ENCODE measurements at regions of chr6 and their contacts with region 1.

Region 1: GRCh38 chr6:144582939-144583613 is 297.9 kb downstream of the UTRN start:
- DNase-seq: no peak
- ATAC-seq: no peak
- H3K4me3 ChIP-seq: no peak overlapping the region
- H3K27ac ChIP-seq: no peak overlapping the region
- H3K4me1 ChIP-seq: peaks cover 0 to 13% of the 10 kb centered on the region in 2 experiments; a peak in 2 of 4 replicates
- H3K27me3 ChIP-seq: no peaks in the 10 kb centered on the region
- CTCF ChIP-seq: no peak
- POLR2A ChIP-seq: no peak
- RAD21 ChIP-seq: no peak

Region 2: DNA sequence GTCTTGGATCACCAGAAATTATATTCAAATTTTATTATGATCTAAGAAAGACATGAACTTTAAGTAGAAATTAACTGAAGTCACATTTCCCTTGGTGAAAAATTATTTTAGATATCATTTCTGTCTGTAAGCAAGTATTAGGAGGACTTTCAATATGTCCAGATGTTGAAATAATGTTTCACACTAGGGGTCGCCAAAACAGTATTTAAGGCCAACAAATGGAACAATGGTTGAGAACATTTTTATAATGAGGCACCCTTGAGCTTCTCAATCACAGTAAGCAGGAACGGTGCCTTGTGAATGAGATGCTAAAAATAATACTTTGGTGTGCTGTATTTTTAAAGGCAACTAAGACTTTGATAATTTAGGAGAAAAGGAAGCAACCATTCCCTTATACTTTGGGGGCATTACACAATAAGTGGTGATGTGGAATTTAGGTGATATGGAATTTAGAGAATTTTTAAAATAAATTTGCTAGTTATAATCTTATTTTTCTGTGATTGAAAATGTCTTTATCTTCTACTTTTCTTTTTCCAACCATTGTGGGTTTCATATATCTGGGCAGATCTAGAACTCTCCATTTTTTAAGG is 478.1 kb before region 1 on chr6:
- CTCF ChIA-PET with region 1: no interaction called
- POLR2A ChIA-PET with region 1: no interaction called
- RAD21 ChIA-PET with region 1: interaction called in 1 of 2 experiments, 3 read pairs
- intact Hi-C with region 1: loop called (anchors 1 kb)
- DNase-seq: peak; percentile 59
- ATAC-seq: peak; percentile 92
- H3K4me3 ChIP-seq: no peak overlapping the region
- H3K27ac ChIP-seq: no peak overlapping the region
- H3K4me1 ChIP-seq: no peaks in the 10 kb centered on the region
- H3K27me3 ChIP-seq: no peaks in the 10 kb centered on the region
- CTCF ChIP-seq: peak; percentile 55 to 88 (median 79)
- POLR2A ChIP-seq: no peak
- RAD21 ChIP-seq: peak; percentile 95

Region 3: DNA sequence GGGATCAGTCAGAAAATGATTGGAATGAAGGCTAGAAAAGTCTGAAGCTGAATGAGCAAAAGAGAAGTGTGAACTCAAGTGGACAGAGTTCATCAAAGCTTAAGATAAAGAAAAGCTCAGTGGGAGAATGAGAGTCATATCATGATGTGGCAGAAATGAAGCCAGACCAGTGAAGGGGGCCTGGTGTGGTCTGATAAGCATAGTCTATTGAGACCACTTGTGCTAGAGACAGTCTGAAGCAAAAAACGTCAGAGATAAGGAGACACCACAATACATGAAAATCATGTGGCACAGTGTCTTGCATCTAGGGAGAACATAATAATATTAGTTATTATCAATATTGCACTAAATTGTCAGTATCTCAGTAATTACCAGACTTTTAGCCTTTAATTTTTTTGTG is 303.6 kb after region 1 on chr6:
- CTCF ChIA-PET with region 1: no interaction called
- POLR2A ChIA-PET with region 1: no interaction called
- RAD21 ChIA-PET with region 1: no interaction called
- intact Hi-C with region 1: no loop called
- DNase-seq: no peak
- ATAC-seq: no peak
- H3K4me3 ChIP-seq: no peak overlapping the region
- H3K27ac ChIP-seq: no peak overlapping the region
- H3K4me1 ChIP-seq: peaks cover 0 to 20% of the 10 kb centered on the region in 2 experiments; a peak in 1 of 4 replicates
- H3K27me3 ChIP-seq: no peaks in the 10 kb centered on the region
- CTCF ChIP-seq: no peak
- POLR2A ChIP-seq: no peak
- RAD21 ChIP-seq: no peak

Region 4: GRCh38 chr6:145028144-145028818 is 445.2 kb after region 1 on chr6:
- CTCF ChIA-PET with region 1: interaction called, 10 read pairs
- POLR2A ChIA-PET with region 1: no interaction called
- RAD21 ChIA-PET with region 1: no interaction called
- intact Hi-C with region 1: loop called (anchors 1 kb)
- DNase-seq: peak; percentile 71
- ATAC-seq: peak; percentile 98
- H3K4me3 ChIP-seq: peak overlapping the region in 1 of 2 experiments; percentile 5; a peak in 1 of 4 replicates
- H3K27ac ChIP-seq: no peak overlapping the region
- H3K4me1 ChIP-seq: peaks cover 0 to 25% of the 10 kb centered on the region in 2 experiments; a peak in 2 of 4 replicates
- H3K27me3 ChIP-seq: no peaks in the 10 kb centered on the region
- CTCF ChIP-seq: peak; percentile 52 to 76 (median 69)
- POLR2A ChIP-seq: no peak
- RAD21 ChIP-seq: peak; percentile 91

Region 5: DNA sequence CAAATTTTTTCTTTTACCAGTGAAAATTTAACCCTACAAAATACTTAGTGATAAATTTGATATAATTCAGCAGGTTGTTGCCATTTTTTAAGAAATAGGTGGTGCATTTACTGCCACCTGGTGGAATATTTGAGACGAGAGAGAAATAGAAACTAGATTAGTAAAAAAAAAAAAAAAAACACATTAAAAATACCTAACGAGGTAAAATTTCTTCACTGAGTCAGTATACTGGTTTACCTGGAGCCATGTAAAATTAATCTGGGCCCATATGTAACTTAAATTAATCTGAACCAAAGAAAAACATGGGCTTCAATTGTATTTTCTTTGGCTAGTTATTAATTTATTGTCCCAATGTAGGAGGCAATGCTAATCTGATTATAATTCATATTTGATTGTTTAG is 631.5 kb after region 1 on chr6:
- CTCF ChIA-PET with region 1: interaction called, 9 read pairs
- POLR2A ChIA-PET with region 1: no interaction called
- RAD21 ChIA-PET with region 1: no interaction called
- intact Hi-C with region 1: loop called (anchors 1 kb)
- DNase-seq: peak; percentile 36
- ATAC-seq: no peak
- H3K4me3 ChIP-seq: no peak overlapping the region
- H3K27ac ChIP-seq: no peak overlapping the region
- H3K4me1 ChIP-seq: peaks cover 0 to 5% of the 10 kb centered on the region in 2 experiments; a peak in 2 of 4 replicates
- H3K27me3 ChIP-seq: no peaks in the 10 kb centered on the region
- CTCF ChIP-seq: peak; percentile 33 to 68 (median 63); a peak in 5 of 6 replicates
- POLR2A ChIP-seq: no peak
- RAD21 ChIP-seq: peak; percentile 77

Region 6: GRCh38 chr6:145633981-145634627 is 1051.0 kb after region 1 on chr6:
- CTCF ChIA-PET with region 1: interaction called, 19 read pairs
- POLR2A ChIA-PET with region 1: no interaction called
- RAD21 ChIA-PET with region 1: no interaction called
- intact Hi-C with region 1: loop called (anchors 1 kb)
- DNase-seq: peak; percentile 75
- ATAC-seq: peak; percentile 98
- H3K4me3 ChIP-seq: no peak overlapping the region
- H3K27ac ChIP-seq: no peak overlapping the region
- H3K4me1 ChIP-seq: no peaks in the 10 kb centered on the region
- H3K27me3 ChIP-seq: no peaks in the 10 kb centered on the region
- CTCF ChIP-seq: peak; percentile 46 to 80 (median 78); a peak in 5 of 6 replicates
- POLR2A ChIP-seq: no peak
- RAD21 ChIP-seq: peak; percentile 90

Measured in HCT116 (cell line).